AG04450 (cell line): ENCODE measurements at regions of chr3 and their contacts with region 1.

Region 1: DNA sequence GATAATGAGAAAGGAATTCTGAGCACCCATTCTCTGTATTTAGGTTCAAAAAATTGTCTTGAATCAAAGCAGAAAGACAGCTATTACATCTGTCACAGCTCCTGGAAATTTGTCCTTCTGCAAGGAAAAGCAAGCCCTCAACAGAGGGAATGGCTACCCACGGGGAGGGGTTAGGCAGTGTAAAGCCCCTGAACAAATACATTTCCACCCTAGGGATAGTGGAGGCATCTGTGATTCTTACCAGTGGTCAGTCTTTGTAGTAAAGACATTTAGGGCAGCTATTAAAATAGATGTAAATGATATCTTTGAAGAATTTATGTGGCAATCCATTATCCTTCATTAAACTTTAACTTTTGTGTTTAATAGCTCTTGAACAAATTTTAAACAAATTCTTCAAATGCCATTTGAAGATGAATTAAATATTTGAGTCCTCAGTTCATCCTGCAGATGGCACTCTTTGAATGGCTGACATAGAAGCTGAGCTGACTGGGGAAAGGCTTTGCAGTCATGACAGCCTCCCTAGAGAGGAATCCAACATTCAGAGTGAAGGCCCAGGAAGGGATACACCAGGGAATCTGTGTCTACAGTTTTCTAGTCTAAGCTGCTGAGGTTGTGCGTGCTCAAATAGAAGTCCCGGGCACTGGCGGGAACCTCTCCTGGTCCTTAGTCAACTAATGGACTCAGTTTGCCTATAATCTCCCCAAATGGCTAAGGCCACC is 359.7 kb upstream of the ROPN1 start:
- DNase-seq: peak; percentile 41
- H3K4me3 ChIP-seq: no peak overlapping the region
- H3K27ac ChIP-seq: no peak overlapping the region
- H3K27me3 ChIP-seq: no peaks in the 10 kb centered on the region
- CTCF ChIP-seq: peak; percentile 69

Region 2: DNA sequence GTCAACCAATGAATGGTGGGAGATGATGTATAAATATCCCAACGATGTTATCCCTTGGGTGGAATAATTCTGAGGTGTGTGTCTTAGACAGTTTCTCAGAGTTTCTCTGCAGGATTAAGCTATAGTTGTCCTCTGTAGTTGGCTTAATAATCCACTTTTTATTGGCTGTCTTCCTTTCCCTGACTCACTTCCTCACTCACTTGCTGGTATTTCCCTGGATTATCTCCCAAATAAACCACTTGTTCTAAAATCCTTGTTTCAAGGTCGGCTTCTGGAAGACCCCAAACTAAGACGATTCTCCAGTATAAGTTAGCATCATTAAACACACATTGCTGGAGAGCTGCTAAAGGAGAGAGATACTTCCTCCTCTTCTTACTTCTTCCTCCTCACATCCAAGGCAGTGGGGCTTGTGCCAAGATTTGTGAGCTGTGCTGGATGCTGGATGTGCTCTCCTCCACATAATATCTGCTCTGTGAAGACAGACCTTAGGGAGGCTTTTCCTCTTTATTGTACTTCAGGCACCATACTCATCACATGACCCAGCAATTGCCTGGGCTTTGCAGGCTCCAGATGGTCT is 337.1 kb before region 1 on chr3:
- CTCF ChIA-PET with region 1: interaction called, 12 read pairs
- POLR2A ChIA-PET with region 1: no interaction called
- DNase-seq: no peak
- H3K4me3 ChIP-seq: no peak overlapping the region
- H3K27ac ChIP-seq: no peak overlapping the region
- H3K27me3 ChIP-seq: peaks cover 10% of the 10 kb centered on the region
- CTCF ChIP-seq: no peak

Region 3: DNA sequence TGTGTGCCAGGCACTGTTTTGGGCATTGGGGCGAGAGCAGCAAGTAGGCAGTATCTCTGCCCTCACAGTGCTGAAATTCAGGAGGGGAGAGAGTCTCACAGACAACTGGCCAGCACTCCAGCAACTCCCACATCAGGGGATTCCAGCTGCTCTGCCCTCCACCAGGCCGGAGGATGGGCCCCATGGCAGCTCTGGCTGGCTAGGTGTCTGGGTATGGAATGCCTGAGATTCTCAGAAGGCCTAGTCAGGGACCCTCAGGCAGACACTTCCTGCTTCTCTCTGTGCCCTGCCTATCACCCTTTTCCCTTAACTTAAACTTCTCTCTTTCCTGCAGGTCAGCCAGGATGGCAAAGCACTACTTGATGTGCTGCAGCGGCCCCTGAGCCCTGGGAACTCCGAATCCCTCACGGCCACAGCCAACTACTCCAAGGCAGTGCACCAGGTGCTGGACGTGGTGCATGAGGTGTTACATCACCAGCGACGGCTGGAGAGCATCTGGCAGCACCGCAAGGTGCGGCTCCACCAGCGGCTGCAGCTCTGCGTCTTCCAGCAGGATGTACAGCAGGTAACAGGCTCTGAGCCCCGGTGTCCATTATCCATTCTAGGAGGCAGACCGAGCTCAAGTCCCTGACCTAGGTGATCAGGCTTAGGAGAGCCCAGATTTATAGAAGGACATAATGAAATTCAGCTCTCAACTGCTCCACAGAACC is 17.5 kb before region 1 on chr3:
- CTCF ChIA-PET with region 1: interaction called, 12 read pairs
- POLR2A ChIA-PET with region 1: no interaction called
- DNase-seq: no peak
- H3K4me3 ChIP-seq: no peak overlapping the region
- H3K27ac ChIP-seq: no peak overlapping the region
- H3K27me3 ChIP-seq: peaks cover 3% of the 10 kb centered on the region
- CTCF ChIP-seq: no peak

Region 4: GRCh38 chr3:124363476-124363875 is 11.9 kb after region 1 on chr3:
- CTCF ChIA-PET with region 1: interaction called, 24 read pairs
- POLR2A ChIA-PET with region 1: no interaction called
- DNase-seq: peak; percentile 16
- H3K4me3 ChIP-seq: no peak overlapping the region
- H3K27ac ChIP-seq: no peak overlapping the region
- H3K27me3 ChIP-seq: no peaks in the 10 kb centered on the region
- CTCF ChIP-seq: no peak

Region 5: DNA sequence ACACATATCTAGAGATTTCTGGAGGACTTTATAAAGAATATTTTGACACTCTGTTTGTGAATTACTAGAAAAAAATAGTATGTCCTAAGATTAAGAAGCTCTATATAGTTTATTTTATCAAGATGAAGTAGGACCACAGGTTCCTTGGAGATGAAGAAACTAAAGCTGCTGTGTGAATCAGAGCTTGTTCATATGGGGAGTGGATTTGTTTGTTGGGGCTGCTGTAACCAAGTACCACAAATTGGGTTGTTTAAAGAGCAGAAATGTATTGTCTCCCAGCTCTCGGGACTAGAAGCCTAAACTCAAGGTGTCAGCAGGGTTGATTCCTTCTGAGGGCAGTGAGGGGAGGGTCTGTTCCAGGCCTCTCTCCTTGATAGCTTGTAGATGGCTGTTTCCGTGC is 108.1 kb after region 1 on chr3:
- CTCF ChIA-PET with region 1: interaction called, 237 read pairs
- POLR2A ChIA-PET with region 1: no interaction called
- DNase-seq: no peak
- H3K4me3 ChIP-seq: no peak overlapping the region
- H3K27ac ChIP-seq: no peak overlapping the region
- H3K27me3 ChIP-seq: no peaks in the 10 kb centered on the region
- CTCF ChIP-seq: no peak

Region 6: DNA sequence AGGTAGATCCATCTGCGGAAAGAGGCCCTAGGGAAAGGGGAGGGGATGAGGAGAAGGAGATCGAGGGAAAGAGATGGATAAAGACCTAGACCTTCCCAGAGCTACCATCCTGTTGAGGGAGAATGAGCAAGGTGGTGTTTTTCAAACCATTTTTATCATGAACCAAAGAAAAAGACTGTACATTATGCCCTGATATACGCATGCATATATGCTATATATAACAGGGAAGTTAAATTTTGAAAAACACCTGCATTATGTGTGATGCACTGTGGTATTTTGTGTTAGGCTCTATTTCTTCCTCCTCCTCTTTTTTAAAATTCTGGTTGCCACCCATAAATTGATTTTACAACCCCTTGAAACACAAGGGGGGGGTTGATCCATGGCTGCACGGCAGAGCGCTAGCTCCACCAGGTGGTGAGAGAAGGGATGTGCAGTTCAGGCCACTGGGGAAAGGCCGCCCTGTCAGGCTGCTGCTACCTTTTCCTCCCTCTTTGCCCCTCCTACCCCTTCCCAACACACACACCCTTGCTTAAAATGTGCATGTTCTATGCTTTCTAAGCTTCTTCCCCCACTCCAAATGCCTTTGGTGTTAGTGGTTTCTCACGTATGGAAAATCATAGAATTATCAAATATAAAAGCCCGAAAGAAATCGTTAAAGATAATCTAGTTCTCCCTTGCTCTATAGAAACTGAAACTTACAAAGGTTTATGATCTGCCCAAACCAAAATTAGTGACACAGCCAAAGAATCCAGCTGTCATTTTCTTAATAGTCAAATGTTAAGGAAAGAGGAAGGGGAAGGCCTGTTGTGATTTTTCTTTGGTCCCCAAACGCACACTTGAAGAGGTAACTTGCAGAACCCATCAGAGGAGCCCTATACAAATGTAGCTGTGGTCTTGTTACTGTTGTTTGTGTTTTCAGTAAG is 116.7 kb after region 1 on chr3:
- CTCF ChIA-PET with region 1: interaction called, 237 read pairs
- POLR2A ChIA-PET with region 1: no interaction called
- DNase-seq: no peak
- H3K4me3 ChIP-seq: no peak overlapping the region
- H3K27ac ChIP-seq: no peak overlapping the region
- H3K27me3 ChIP-seq: peaks cover 5% of the 10 kb centered on the region
- CTCF ChIP-seq: peak; percentile 99

Region 7: GRCh38 chr3:124552239-124552638 is 200.7 kb after region 1 on chr3:
- CTCF ChIA-PET with region 1: interaction called, 50 read pairs
- POLR2A ChIA-PET with region 1: no interaction called
- DNase-seq: no peak
- H3K4me3 ChIP-seq: no peak overlapping the region
- H3K27ac ChIP-seq: no peak overlapping the region
- H3K27me3 ChIP-seq: peaks cover 8% of the 10 kb centered on the region
- CTCF ChIP-seq: no peak

Region 8: GRCh38 chr3:124648551-124648950 is 297.0 kb after region 1 on chr3:
- CTCF ChIA-PET with region 1: no interaction called
- POLR2A ChIA-PET with region 1: no interaction called
- DNase-seq: no peak
- H3K4me3 ChIP-seq: no peak overlapping the region
- H3K27ac ChIP-seq: no peak overlapping the region
- H3K27me3 ChIP-seq: peaks cover 11% of the 10 kb centered on the region
- CTCF ChIP-seq: no peak

Region 9: GRCh38 chr3:124860599-124860998 is 509.0 kb after region 1 on chr3:
- CTCF ChIA-PET with region 1: no interaction called
- POLR2A ChIA-PET with region 1: no interaction called
- DNase-seq: peak; percentile 86
- H3K4me3 ChIP-seq: no peak overlapping the region
- H3K27ac ChIP-seq: peak overlapping the region; percentile 69
- H3K27me3 ChIP-seq: no peaks in the 10 kb centered on the region
- CTCF ChIP-seq: no peak